Calu3 (cell line): ENCODE measurements at regions of chr1 and their contacts with region 1.

Region 1: DNA sequence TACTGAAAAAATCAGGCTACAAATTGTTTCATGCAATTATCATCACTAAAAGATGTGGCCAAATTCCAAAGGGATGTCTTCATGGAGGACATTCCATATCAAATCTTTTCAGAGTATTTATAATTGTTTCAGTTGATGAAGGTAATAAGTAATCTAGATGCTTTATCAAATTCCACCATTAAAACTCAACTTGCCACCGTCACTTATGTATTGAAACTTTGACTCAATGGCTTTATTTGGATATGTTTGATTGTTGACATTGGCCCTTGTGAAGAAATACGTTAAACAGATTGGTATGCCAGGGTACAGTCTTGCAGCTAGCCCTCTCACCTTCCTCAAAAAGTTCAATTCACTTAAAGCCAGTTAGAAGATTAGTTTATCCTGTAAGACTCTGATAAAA is 32.2 kb upstream of the PALMD start:
- DNase-seq: no peak
- H3K4me3 Mint-ChIP-seq: no peak overlapping the region
- H3K27ac Mint-ChIP-seq: no peak overlapping the region
- H3K4me1 Mint-ChIP-seq: peaks cover 19% of the 10 kb centered on the region
- H3K27me3 Mint-ChIP-seq: no peaks in the 10 kb centered on the region
- CTCF ChIP-seq: no peak

Region 2: DNA sequence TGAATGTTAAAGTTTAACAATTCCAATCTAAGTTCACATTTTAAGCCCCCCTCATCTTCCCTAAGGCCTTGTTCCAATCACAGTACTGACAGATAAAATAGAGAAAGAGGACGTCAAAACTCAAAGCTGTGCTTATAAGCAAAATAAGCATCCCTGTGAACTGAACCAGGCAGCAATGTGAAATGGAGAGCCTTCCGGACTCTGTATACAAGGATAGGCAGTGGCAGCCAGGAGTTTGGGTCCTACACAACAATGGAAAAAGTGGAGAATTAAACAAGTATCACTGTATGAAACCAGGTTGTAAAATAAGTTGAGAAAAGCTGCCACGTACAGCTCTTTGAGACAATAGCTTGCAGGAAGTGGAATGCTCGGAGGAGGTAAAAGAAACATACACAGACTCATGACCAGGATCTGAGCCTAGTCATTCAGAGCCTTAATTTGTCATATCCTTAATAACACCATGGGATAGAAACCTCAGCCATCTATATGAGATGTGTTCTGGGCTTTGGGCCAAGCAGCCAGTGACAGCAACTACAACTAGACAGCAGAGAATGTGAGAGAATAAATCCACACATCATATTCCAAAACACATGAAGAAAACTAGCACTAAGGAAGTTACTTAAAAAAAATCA is 23.0 kb before region 1 on chr1:
- CTCF ChIA-PET with region 1: no interaction called
- intact Hi-C with region 1: loop called (anchors 2 kb)
- DNase-seq: peak; percentile 19
- H3K4me3 Mint-ChIP-seq: no peak overlapping the region
- H3K27ac Mint-ChIP-seq: peak overlapping the region; percentile 80
- H3K4me1 Mint-ChIP-seq: peaks cover 26% of the 10 kb centered on the region
- H3K27me3 Mint-ChIP-seq: no peaks in the 10 kb centered on the region
- CTCF ChIP-seq: no peak